ENCODE measurements at regions of chr20 and their contacts with region 1.

Region 1: DNA sequence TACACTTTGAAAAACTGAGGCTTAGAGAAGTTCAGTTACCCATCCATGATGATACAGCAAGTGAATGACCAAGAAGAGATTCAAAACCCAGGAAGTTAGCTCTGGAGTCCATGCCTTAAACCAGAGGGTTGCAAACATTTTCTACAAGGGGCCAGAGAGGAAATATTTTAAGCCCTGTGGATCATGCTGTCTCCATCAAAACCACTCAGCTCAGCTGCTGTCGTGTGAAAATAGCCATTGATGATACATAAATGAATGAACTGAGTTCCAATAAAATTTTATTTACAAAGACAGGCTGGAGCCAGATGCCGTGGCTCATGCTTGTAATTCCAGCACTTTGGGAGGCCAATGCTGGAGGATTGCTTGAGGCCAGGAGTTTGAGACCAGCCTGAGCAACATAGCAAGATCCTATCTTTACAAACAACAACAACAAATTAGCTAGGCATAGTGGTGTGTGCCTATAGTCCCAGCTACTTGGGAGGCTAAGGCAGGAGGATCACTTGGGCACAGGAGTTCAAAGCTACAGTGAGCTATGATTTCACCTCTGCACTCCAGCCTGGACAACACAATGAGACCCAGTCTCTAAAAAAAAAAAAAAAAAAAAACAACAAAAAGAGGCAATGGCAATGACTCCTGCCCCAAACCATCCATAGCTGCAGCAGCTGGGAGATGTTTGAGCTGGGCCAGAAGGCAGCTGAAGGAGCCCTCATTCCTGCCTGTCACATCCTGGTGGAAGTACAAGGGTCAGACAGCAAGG is 44.1 kb upstream of the RIN2 start:
- DNase-seq: peak; percentile 42 to 60
- H3K4me3 ChIP-seq: no peak overlapping the region
- H3K4me3 Mint-ChIP-seq: no peak overlapping the region
- H3K27ac Mint-ChIP-seq: peak overlapping the region; percentile 84
- H3K4me1 ChIP-seq: peaks cover 42% of the 10 kb centered on the region
- H3K4me1 Mint-ChIP-seq: peaks cover 20% of the 10 kb centered on the region
- H3K27me3 ChIP-seq: no peaks in the 10 kb centered on the region
- H3K27me3 Mint-ChIP-seq: no peaks in the 10 kb centered on the region
- CTCF ChIP-seq: no peak

Region 2: GRCh38 chr20:19767061-19767460 is 53.1 kb after region 1 on chr20:
- CTCF ChIA-PET with region 1: interaction called, 5 read pairs
- POLR2A ChIA-PET with region 1: no interaction called
- intact Hi-C with region 1: loop called (anchors 2 kb)
- DNase-seq: peak; percentile 89 to 92
- H3K4me3 ChIP-seq: no peak overlapping the region
- H3K4me3 Mint-ChIP-seq: peak overlapping the region; percentile 69
- H3K27ac Mint-ChIP-seq: peak overlapping the region; percentile 100
- H3K4me1 ChIP-seq: peaks cover 65% of the 10 kb centered on the region
- H3K4me1 Mint-ChIP-seq: peaks cover 70% of the 10 kb centered on the region
- H3K27me3 ChIP-seq: no peaks in the 10 kb centered on the region
- H3K27me3 Mint-ChIP-seq: no peaks in the 10 kb centered on the region
- CTCF ChIP-seq: no peak

Region 3: DNA sequence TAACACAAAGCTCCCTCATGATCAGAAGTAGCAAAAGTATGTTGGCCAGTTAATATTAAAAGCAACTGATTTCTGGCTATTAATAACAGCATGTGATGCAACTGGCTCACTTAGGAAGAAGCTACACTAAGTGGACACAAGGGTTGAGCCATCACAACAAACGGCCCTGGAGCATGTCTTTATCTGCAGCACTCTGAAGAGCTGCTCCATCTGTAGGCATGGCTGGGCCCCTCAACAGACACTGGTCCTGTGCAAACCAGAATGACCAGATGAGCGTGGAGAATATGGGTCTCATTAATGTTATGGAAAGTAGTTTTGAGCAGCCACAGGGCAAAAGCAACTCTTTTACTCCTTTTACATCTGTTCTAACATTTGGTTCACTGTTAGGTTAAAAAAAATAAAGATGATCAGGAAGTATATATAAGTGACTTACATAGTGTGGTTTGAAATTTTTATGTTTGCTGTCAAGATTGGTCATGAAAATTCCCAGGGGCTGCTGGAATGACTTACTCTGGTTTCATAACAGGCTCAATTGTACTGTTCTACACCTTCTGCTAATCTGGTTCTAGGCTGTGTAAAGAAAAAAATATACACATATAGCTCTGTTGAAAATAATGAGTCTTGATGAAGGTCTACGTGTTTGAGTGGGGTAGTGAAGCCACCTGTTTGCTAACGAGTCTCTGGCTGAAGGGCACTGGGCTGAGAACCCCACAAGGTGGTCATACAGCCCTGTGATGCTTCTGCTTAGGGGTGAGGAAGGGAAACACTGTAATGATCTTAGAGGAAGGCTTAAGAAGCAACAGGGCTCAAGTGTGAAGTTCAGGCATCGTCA is 712.0 kb after region 1 on chr20:
- CTCF ChIA-PET with region 1: interaction called, 11 read pairs
- POLR2A ChIA-PET with region 1: no interaction called
- intact Hi-C with region 1: no loop called
- DNase-seq: no peak
- H3K4me3 ChIP-seq: no peak overlapping the region
- H3K4me3 Mint-ChIP-seq: no peak overlapping the region
- H3K27ac Mint-ChIP-seq: no peak overlapping the region
- H3K4me1 ChIP-seq: no peaks in the 10 kb centered on the region
- H3K4me1 Mint-ChIP-seq: no peaks in the 10 kb centered on the region
- H3K27me3 ChIP-seq: no peaks in the 10 kb centered on the region
- H3K27me3 Mint-ChIP-seq: no peaks in the 10 kb centered on the region
- CTCF ChIP-seq: no peak